ENCODE measurements at regions of chr19 and their contacts with region 1.

Region 1: DNA sequence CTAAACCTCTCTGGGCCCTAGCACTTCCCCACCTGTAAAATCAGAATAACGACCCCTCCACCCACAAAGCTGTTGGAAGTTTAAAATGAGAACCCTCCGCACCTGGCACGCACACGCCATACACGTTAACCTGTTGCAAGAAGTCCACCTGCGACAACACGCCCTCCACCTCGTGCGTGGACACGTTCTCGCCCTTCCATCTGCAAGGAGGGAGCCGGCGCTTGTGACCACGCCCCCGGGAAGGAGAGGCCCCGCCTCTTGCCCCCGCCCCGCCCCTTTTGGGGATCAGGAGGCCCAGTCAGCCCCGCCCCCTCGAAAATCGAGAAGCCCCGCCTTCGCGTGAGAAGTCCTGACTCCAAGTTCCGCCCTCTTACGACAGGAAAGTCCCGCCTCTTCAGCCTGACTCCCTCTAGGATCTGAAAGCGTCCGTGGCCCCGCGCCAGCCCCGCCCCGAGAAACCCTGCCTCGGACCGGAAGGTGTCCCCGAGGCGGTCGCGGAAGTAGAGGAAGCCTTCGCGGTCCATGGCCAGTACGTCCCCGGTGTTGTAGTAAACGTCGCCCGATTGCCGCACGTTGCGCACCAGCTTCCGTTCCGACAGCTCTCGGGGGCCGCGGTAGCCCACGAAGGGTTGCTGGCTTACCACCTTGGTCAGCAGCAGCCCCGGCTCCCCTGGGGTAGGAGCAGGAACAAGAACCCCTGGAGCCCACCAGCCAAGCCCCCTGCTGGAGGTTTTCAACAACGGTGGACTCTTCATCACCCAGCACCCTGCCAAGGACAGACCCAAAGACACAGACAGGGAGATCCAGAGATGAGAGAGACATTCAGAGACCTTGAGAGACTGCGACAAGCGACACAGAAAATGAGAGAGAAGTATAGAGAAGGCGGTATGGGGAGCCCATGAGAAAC is 12.5 kb downstream of the SLC27A5 start:
- DNase-seq: peak; percentile 99
- H3K4me3 ChIP-seq: peak overlapping the region; percentile 58 to 77
- H3K27ac ChIP-seq: peak overlapping the region; percentile 70 to 74
- H3K4me1 ChIP-seq: peaks cover 0 to 24% of the 10 kb centered on the region in 2 experiments; a peak in 1 of 4 replicates
- H3K27me3 ChIP-seq: no peaks in the 10 kb centered on the region
- CTCF ChIP-seq: peak; percentile 57
- EP300 ChIP-seq: no peak
- RAD21 ChIP-seq: no peak

Region 2: DNA sequence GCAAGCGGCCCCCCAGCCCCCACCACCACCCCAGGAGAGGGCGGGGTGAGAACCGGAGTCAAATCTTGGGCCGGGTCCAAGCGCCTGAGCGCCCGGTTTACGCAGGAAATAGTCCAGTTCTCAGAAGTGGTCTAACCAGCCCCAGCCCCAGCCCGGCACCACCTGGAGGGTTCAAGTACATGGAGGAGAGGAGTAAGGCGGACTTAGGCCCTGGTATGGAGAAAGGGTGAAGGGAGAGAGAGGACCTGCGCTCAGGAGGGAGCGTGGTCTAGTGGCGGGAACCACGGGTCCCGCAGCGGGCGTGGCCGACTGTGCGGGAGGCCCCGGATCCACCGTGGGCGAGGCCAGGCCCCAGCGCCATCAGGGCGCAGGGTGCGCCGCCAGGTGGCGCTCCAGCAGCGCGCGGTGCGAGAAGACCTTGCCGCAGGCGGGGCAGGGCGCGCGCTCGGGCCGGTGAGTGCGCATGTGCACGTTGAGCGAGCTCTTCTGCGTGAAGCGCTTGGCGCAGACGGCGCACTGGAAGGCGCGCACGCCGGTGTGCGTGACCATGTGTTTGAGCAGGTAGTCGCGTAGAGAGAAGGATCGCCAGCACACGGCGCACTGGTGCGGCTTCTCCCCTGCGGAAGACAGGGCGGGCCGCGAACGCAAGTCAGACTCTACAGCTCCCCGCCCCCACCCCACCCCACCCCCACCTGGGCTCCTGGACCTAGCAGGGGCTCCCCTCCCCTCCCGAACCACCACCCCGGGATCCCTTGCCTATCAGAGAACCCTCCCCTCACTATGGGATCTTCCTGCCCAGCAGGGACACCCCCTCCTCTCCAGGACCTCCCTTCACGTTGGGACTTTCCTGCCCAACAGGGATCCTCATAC is 14.7 kb after region 1 on chr19:
- CTCF ChIA-PET with region 1: interaction called, 27 read pairs
- POLR2A ChIA-PET with region 1: interaction called, 3 read pairs
- DNase-seq: peak; percentile 99
- H3K4me3 ChIP-seq: peak overlapping the region; percentile 35 to 47; a peak in 3 of 4 replicates
- H3K27ac ChIP-seq: peak overlapping the region; percentile 41 to 85
- H3K4me1 ChIP-seq: peaks cover 0 to 34% of the 10 kb centered on the region in 2 experiments; a peak in 1 of 4 replicates
- H3K27me3 ChIP-seq: no peaks in the 10 kb centered on the region
- CTCF ChIP-seq: peak; percentile 85
- EP300 ChIP-seq: no peak
- RAD21 ChIP-seq: peak; percentile 69